ENCODE measurements at regions of chr14 and their contacts with region 1.

Region 1: DNA sequence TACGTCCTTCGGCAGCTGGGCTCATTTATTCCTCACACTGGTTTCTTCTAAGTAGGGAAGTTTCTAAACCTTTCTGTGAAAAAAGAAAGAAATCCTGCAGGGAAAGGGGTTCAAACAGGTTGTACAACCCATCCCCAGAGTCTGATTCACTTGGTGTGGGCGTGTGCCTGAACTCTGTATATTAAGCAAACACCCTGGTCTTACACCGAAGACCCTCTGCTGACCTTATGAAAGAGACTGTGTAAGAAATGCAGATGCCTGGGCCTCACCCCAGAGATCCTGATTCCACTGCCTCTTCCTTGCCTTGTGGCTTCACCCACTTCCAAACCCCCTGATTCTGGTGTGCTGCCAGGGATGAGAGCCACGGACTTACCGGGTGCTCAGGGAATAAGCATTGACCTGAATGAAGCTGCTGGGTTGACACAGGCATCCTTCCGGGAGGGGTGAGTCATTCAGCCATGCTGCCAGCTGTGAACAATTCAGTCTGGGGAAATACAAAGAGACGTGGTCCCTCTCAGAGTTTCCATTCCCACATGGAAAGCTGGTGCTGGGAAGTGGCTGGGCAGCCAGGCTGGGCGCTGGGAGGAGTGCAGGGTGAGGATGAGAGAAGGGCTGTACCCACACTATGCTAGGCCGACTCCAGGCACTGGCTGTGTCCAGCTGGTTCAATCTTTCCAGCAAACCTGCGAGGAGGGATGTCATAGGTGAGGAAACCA is 26.5 kb upstream of the ACTN1 start:
- DNase-seq: no peak
- H3K4me3 ChIP-seq: no peak overlapping the region
- H3K27ac ChIP-seq: no peak overlapping the region
- H3K4me1 ChIP-seq: peaks cover 3 to 18% (median 11%) of the 10 kb centered on the region in 4 experiments
- H3K27me3 ChIP-seq: no peaks in the 10 kb centered on the region
- CTCF ChIP-seq: no peak
- EP300 ChIP-seq: no peak
- POLR2A ChIP-seq: no peak
- RAD21 ChIP-seq: no peak; a peak in 1 of 4 replicates

Region 2: GRCh38 chr14:68979021-68979782 is 26.4 kb before region 1 on chr14 and contains the start of gene ACTN1:
- CTCF ChIA-PET with region 1: interaction called, 5 read pairs
- POLR2A ChIA-PET with region 1: interaction called, 12 read pairs
- DNase-seq: peak; percentile 87 to 89
- H3K4me3 ChIP-seq: peak within 1 kb of the TSS; percentile 78 to 99 (median 91)
- H3K27ac ChIP-seq: peak within 1 kb of the TSS; percentile 88
- H3K4me1 ChIP-seq: peaks cover 4 to 20% (median 11%) of the 10 kb centered on the region in 4 experiments
- H3K27me3 ChIP-seq: no peaks in the 10 kb centered on the region; a peak in 1 of 7 replicates
- CTCF ChIP-seq: no peak
- EP300 ChIP-seq: 0 out of 3 replicates have a peak, but pooled peaks of 1 of the 2 experiments have one; percentile 29
- POLR2A ChIP-seq: peak; percentile 82 to 85
- RAD21 ChIP-seq: no peak
- total RNA-seq, gene ACTN1: 253 and 262 TPM in 2 replicates

Region 3: DNA sequence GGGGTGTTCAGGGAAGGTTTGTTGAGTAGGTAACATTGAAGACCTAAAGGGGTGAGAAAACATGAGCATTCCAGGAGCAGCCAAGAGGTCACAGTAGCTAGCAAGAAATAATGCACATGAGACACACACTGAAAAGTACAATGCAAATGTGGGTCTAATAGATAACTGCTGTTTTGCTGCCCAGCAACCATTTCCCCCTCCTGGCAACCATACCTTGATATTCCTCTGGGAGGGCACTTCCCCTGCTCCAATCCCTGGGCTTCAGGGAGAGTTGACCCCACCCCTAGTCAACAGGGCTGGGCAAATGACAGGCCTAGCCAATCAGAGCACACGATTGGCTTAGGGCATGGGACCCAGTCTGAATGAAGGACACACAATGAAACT is 17.9 kb before region 1 on chr14:
- CTCF ChIA-PET with region 1: interaction called, 24 read pairs
- POLR2A ChIA-PET with region 1: interaction called, 3 read pairs
- DNase-seq: no peak
- H3K4me3 ChIP-seq: no peak overlapping the region
- H3K27ac ChIP-seq: no peak overlapping the region
- H3K4me1 ChIP-seq: peaks cover 0 to 4% (median 1%) of the 10 kb centered on the region in 4 experiments; a peak in 2 of 7 replicates
- H3K27me3 ChIP-seq: no peaks in the 10 kb centered on the region
- CTCF ChIP-seq: no peak
- EP300 ChIP-seq: no peak
- POLR2A ChIP-seq: no peak
- RAD21 ChIP-seq: no peak; a peak in 1 of 4 replicates

Region 4: DNA sequence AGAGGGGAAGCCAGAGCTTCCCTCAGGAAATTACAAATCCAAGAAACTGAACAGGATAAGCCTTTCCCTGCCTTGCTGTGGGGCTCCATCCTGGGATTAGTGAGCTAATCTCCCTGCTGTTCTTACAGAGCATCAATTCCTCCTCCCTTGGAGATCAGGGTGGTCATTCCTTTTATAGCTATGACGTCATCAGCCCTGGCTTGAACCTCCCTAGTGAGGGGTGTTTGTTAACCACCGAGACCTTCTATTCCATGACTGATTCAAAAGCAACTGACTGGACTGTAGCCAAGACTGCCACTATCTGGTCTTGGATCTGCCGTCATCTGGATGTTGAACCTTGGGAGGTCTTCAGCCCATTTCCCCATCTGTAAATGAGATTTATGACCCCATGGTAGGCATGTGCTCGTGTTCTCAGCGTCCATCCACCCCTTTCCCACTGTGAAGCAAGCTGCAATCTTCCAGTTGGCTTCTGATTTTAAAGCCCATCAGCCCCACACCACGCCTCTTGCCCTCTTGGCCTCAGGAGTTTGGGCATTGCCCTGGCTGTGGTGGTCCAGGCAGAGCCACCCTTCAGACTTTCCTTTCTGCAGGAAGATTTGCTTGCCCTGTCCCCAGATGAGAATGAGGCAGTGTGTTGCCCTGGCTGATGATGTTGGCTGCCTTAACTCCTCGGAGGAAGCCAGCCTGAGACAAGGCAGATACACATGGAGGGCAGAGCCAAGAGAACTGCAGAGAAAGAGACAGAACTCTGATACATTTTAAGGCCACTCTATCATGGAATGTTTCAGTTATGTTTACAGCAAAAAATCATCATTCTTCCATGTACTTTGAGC is 33.1 kb after region 1 on chr14:
- CTCF ChIA-PET with region 1: interaction called, 10 read pairs
- POLR2A ChIA-PET with region 1: no interaction called
- DNase-seq: no peak
- H3K4me3 ChIP-seq: no peak overlapping the region
- H3K27ac ChIP-seq: no peak overlapping the region
- H3K4me1 ChIP-seq: peaks cover 3 to 20% (median 12%) of the 10 kb centered on the region in 4 experiments
- H3K27me3 ChIP-seq: no peaks in the 10 kb centered on the region
- CTCF ChIP-seq: no peak
- EP300 ChIP-seq: no peak
- POLR2A ChIP-seq: no peak
- RAD21 ChIP-seq: no peak

Region 5: GRCh38 chr14:69398053-69398817 is 392.6 kb after region 1 on chr14 and contains the starts of genes ERH and SLC39A9:
- CTCF ChIA-PET with region 1: no interaction called
- POLR2A ChIA-PET with region 1: no interaction called
- DNase-seq: peak; percentile 85 to 89
- H3K4me3 ChIP-seq: peak within 1 kb of the TSS; percentile 83 to 98 (median 92)
- H3K27ac ChIP-seq: peak within 1 kb of the TSS; percentile 93
- H3K4me1 ChIP-seq: peaks cover 0 to 2% (median under 1%) of the 10 kb centered on the region in 4 experiments; a peak in 2 of 7 replicates
- H3K27me3 ChIP-seq: no peaks in the 10 kb centered on the region
- CTCF ChIP-seq: no peak
- EP300 ChIP-seq: 0 out of 3 replicates have a peak, but pooled peaks of 1 of the 2 experiments have one; percentile 4
- POLR2A ChIP-seq: peak; percentile 81 to 98
- RAD21 ChIP-seq: no peak
- total RNA-seq, gene ERH: 447 and 454 TPM in 2 replicates
- total RNA-seq, gene SLC39A9: 43.8 and 44.2 TPM in 2 replicates